HEK293T (cell line): ENCODE measurements at regions of chr1 and their contacts with region 1.

Region 1: DNA sequence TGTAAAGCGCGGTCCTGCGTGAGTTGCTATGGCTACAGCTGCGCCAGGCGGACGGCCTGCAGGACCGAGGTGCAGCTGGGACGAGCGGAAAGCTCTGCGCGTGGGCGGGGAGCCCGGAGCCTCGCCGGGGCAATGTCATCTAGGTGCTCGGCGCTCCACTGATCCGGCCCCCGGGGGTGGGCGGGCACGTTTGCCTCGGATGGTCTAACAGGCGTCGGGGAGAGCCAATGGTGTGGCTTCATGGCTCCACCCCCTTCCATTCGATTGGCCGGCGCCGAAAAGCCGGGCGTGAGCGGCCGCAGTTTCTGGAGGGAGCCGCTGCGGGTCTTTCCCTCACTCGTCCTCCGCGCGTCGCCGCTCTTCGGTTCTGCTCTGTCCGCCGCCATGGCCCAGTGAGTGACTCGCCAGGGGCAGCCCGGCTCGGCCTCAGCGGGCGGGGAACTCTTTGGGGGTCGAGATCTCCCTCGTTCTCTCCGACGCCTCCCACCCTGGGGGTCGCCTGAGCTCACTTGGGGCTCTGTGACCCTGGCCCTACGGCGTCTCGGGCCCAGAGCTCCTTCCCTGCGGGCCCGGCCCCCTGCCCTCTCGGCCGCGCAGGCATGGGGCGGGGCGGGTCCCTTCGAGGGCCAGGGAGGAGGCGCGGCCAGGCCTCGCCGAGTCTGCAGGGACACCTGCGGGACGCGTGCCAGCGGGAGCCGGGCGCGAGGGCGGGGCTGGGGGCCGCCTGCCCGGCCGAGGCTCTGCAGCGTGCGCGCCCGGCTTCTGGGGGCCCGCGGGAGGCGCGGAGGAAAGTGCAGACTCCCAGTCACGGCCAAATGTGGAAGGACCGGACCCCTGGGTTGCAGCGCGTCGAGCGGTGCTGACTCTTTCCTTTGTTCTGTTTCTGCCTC is at the start of gene PGD:
- DNase-seq: peak; percentile 98

Region 2: GRCh38 chr1:10387413-10388079 is 11.4 kb before region 1 on chr1:
- CTCF ChIA-PET with region 1: no interaction called
- POLR2A ChIA-PET with region 1: interaction called, 10 read pairs
- DNase-seq: no peak

Region 3: DNA sequence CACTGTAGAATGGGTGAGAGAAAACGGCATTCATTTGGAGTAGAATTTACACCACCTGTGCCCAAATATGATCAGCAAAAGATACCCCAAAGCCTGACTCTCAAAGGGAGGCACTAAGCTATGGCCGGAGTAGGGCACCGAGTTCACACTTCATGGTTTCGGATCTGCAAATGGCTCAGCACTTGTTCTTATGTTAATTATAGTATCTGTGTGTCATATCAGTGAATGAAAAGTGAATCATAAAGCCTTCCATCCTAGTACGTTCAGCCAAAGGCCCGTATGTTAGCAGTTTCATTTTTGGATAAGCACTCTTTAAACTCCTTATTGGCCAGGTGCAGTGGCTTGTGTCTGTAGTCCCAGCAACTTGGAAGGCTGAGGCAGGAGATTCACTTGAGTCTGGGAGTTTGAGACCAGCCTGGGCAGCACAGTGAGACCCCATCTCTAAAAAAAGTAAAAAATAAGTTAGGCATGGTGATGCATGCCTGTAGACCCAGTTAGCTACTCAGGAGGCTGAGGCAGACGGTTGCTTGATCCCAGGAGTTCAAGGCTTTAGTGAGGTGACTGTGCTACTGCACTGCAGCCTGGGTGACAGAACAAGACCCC is 45.9 kb after region 1 on chr1:
- CTCF ChIA-PET with region 1: no interaction called
- POLR2A ChIA-PET with region 1: no interaction called
- DNase-seq: no peak